Left cardiac atrium (tissue), 4 donors: ENCODE measurements at regions of chr20 and their contacts with region 1.

Region 1: GRCh38 chr20:6829510-6830116 is 62.1 kb downstream of the BMP2 start:
- DNase-seq: no peak
- ATAC-seq: no peak

Region 2: DNA sequence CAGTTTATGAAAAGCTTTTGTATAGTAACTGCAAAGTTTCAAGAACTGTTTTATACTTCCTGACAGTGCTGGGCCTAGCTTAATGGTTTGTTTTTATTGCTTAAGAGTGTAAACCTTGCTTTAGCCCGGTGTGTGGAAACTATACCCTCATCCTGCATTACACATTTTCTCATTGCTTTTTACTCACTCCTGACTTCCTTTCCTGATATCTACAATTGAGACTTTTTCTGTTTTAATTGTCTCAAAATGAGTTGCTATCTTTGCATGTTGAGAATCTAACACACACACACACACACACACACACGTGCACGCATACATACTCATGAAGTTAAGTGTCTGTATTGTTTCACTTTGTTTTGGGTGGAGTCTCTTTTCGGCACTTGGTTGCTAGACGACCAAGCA is 45.4 kb before region 1 on chr20:
- intact Hi-C with region 1: no loop called
- DNase-seq: no peak
- ATAC-seq: peak in 1 of 2 donors; percentile 8

Region 3: DNA sequence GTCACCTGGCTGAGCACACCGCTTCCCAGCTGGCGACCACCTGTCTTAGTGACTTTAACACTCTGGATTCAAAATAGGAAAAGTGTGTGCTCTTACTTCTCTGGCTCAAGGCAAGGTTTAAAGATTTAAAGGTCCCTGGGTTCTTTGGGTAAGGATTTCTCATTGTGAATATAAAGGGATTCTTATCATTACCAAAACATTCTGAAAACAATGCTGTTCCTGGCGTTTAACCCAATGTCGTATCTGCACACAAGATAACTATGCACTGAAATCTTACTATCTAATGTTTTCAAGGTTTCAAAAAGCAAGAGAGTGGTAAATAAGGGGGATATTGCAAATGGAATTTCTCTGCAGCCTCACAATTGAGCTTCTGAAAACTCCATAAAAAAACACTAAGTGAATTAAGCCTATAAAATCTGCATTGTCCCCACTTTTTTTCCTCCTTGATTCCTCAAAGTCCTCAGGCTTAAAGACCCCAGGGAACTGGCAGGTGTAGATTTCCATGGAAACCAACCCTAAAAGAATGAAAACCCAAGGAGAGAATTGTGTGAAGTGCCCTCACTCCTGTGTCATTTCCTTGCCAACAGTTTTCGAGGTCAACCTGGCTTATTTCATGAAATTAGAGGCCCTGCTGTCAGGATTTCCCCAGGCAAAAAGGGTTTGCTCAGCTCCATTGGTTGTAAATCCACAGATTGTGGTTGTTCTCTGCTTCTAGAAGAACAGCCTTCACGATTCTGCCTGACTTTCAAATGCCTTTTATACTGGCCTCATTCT is 18.2 kb before region 1 on chr20:
- intact Hi-C with region 1: no loop called
- DNase-seq: no peak
- ATAC-seq: no peak

Region 4: GRCh38 chr20:7859356-7859802 is 1029.8 kb after region 1 on chr20:
- intact Hi-C with region 1: loop called in 1 of 2 experiments (anchors 10 kb)
- DNase-seq: no peak
- ATAC-seq: peak; percentile 82